MCF 10A (cell line): ENCODE measurements at regions of chr19 and their contacts with region 1.

Region 1: GRCh38 chr19:18571564-18572300 is at the start of gene UBA52:
- DNase-seq: peak; percentile 99
- H3K4me3 Mint-ChIP-seq: peak within 1 kb of the TSS; percentile 87
- H3K27ac Mint-ChIP-seq: peak within 1 kb of the TSS; percentile 98
- H3K4me1 Mint-ChIP-seq: peaks cover 9% of the 10 kb centered on the region
- H3K27me3 Mint-ChIP-seq: no peaks in the 10 kb centered on the region
- CTCF ChIP-seq: no peak
- total RNA-seq, gene UBA52: 1,330 and 1,392 TPM in 2 replicates

Region 2: GRCh38 chr19:18469069-18469846 is 102.5 kb before region 1 on chr19:
- CTCF ChIA-PET with region 1: interaction called, 4 read pairs
- POLR2A ChIA-PET with region 1: interaction called, 4 read pairs
- intact Hi-C with region 1: loop called (anchors 2 kb)
- DNase-seq: peak; percentile 57
- H3K4me3 Mint-ChIP-seq: no peak overlapping the region
- H3K27ac Mint-ChIP-seq: no peak overlapping the region
- H3K4me1 Mint-ChIP-seq: peaks cover 26% of the 10 kb centered on the region
- H3K27me3 Mint-ChIP-seq: no peaks in the 10 kb centered on the region
- CTCF ChIP-seq: peak; percentile 84

Region 3: GRCh38 chr19:18557474-18558201 is 14.1 kb before region 1 on chr19 and contains the start of gene KXD1:
- CTCF ChIA-PET with region 1: interaction called, 4 read pairs
- POLR2A ChIA-PET with region 1: interaction called, 106 read pairs
- intact Hi-C with region 1: no loop called
- DNase-seq: peak; percentile 99
- H3K4me3 Mint-ChIP-seq: peak within 1 kb of the TSS; percentile 74
- H3K27ac Mint-ChIP-seq: peak within 1 kb of the TSS; percentile 86
- H3K4me1 Mint-ChIP-seq: peaks cover 11% of the 10 kb centered on the region
- H3K27me3 Mint-ChIP-seq: no peaks in the 10 kb centered on the region
- CTCF ChIP-seq: no peak
- total RNA-seq, gene KXD1: 120 and 126 TPM in 2 replicates

Region 4: GRCh38 chr19:18802354-18802753 is 230.6 kb after region 1 on chr19:
- CTCF ChIA-PET with region 1: no interaction called
- POLR2A ChIA-PET with region 1: no interaction called
- intact Hi-C with region 1: no loop called
- DNase-seq: no peak
- H3K4me3 Mint-ChIP-seq: no peak overlapping the region
- H3K27ac Mint-ChIP-seq: no peak overlapping the region
- H3K4me1 Mint-ChIP-seq: no peaks in the 10 kb centered on the region
- H3K27me3 Mint-ChIP-seq: peaks cover 5% of the 10 kb centered on the region
- CTCF ChIP-seq: no peak

Region 5: GRCh38 chr19:18831524-18832305 is 260.0 kb after region 1 on chr19 and contains the start of gene UPF1:
- CTCF ChIA-PET with region 1: no interaction called
- POLR2A ChIA-PET with region 1: interaction called, 11 read pairs
- intact Hi-C with region 1: no loop called
- DNase-seq: peak; percentile 90
- H3K4me3 Mint-ChIP-seq: peak within 1 kb of the TSS; percentile 94
- H3K27ac Mint-ChIP-seq: peak within 1 kb of the TSS; percentile 98
- H3K4me1 Mint-ChIP-seq: peaks cover 25% of the 10 kb centered on the region
- H3K27me3 Mint-ChIP-seq: no peaks in the 10 kb centered on the region
- CTCF ChIP-seq: no peak
- total RNA-seq, gene UPF1: 79.8 and 85.0 TPM in 2 replicates